ENCODE measurements at regions of chr5 and their contacts with region 1.

Region 1: DNA sequence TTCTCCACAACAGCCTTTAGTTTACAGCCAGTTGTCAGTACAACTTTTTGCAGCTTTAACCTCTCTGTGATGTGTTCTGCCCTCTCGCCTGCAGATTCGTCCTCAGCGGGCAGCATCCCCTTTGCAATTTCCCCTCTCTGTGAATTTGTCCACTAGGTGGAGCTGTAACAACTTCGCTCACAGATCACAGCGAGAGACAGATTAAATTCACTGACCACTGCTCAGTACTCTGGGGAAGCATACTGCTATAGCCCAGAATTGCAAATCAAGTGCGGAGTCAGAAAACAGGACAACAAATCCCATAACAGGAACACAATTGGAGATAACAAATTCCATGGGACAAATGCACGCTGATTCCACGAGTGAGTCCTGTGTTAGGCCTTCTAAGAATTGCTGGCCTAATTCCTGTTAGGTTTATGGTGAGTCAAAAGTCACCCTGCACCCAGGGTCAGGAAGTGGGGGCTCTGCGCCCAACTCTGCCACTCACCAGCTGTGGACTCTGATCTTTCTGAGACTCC is 2124.9 kb downstream of the MAT2B start:
- DNase-seq: peak; percentile 69
- H3K4me3 ChIP-seq: peak overlapping the region in 1 of 2 experiments; percentile 43; a peak in 1 of 4 replicates
- H3K27ac ChIP-seq: no peak overlapping the region
- H3K4me1 ChIP-seq: no peaks in the 10 kb centered on the region; a peak in 1 of 4 replicates
- H3K27me3 ChIP-seq: no peaks in the 10 kb centered on the region
- CTCF ChIP-seq: peak; percentile 72
- EP300 ChIP-seq: no peak
- RAD21 ChIP-seq: peak; percentile 89

Region 2: DNA sequence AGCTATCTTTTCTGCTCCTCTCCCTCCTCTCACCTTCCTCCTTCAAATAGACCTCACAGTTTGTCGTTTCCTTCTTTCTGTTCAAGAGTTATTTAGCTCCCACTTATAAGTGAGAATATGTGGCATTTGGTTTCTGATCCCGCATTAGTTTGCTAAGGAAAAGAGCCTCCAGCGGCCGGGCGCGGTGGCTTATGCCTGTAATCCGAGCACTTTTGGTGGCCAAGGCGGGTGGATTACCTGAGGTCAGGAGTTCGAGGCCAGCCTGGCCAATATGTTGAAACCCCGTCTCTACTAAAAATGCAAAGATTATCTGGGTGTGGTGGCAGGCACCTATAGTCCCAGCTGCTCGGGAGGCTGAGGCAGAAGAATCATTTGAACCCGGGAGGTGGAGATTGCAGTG is 23.3 kb before region 1 on chr5:
- CTCF ChIA-PET with region 1: interaction called, 13 read pairs
- POLR2A ChIA-PET with region 1: no interaction called
- DNase-seq: no peak
- H3K4me3 ChIP-seq: no peak overlapping the region
- H3K27ac ChIP-seq: no peak overlapping the region
- H3K4me1 ChIP-seq: no peaks in the 10 kb centered on the region
- H3K27me3 ChIP-seq: no peaks in the 10 kb centered on the region
- CTCF ChIP-seq: no peak
- EP300 ChIP-seq: no peak
- RAD21 ChIP-seq: no peak

Region 3: DNA sequence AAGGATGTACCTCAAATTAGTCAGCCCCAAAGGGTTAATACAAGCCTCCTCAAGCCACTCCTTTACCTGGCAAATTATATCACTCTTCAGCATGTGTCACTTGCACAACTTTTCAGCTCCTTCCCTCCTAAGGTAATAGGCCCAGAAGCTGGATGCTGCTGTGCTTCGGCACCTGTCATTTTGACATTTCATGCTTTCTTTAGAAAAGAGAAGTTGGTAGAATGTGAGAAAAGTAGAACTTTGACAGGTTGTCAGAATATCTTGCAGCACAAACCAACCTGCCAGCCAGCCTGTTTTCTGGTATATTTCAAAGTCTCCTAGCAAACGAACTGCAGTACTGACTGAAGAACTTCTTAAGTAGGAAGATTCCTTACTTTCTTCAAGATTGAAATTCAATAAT is 12.0 kb after region 1 on chr5:
- CTCF ChIA-PET with region 1: interaction called, 12 read pairs
- POLR2A ChIA-PET with region 1: no interaction called
- DNase-seq: no peak
- H3K4me3 ChIP-seq: no peak overlapping the region
- H3K27ac ChIP-seq: no peak overlapping the region
- H3K4me1 ChIP-seq: no peaks in the 10 kb centered on the region
- H3K27me3 ChIP-seq: no peaks in the 10 kb centered on the region
- CTCF ChIP-seq: no peak
- EP300 ChIP-seq: no peak
- RAD21 ChIP-seq: no peak

Region 4: GRCh38 chr5:167049043-167049663 is 1418.8 kb after region 1 on chr5:
- CTCF ChIA-PET with region 1: interaction called, 28 read pairs
- POLR2A ChIA-PET with region 1: no interaction called
- DNase-seq: peak; percentile 43
- H3K4me3 ChIP-seq: no peak overlapping the region
- H3K27ac ChIP-seq: no peak overlapping the region
- H3K4me1 ChIP-seq: no peaks in the 10 kb centered on the region
- H3K27me3 ChIP-seq: no peaks in the 10 kb centered on the region
- CTCF ChIP-seq: peak; percentile 75
- EP300 ChIP-seq: no peak
- RAD21 ChIP-seq: peak; percentile 82

Region 5: DNA sequence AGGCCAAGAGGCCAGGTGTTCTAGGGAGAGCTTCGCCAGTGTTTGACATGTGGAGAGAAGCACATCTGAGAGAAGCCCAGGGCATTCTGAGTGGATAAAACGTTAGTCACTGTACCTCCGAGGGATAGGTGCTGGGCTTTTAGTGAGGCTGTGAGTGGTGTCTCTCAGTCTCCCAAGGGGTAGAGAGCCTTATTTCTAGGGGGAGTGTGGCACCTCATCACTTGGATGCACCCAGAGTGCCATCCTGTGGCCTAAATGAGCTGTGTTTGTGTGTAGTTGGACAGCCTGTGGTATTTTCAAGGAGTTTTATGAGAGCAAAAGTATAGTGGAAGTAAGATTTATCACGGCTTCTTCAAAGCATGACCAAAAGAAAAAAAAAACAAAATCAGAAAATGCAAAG is 1614.3 kb after region 1 on chr5:
- CTCF ChIA-PET with region 1: interaction called, 10 read pairs
- POLR2A ChIA-PET with region 1: no interaction called
- DNase-seq: peak; percentile 22
- H3K4me3 ChIP-seq: peak overlapping the region in 1 of 2 experiments; percentile 25; a peak in 1 of 4 replicates
- H3K27ac ChIP-seq: no peak overlapping the region
- H3K4me1 ChIP-seq: no peaks in the 10 kb centered on the region
- H3K27me3 ChIP-seq: no peaks in the 10 kb centered on the region
- CTCF ChIP-seq: peak; percentile 59
- EP300 ChIP-seq: no peak
- RAD21 ChIP-seq: peak; percentile 69